ENCODE measurements at regions of chr17 and their contacts with region 1.

Region 1: GRCh38 chr17:70006159-70006558 is 68.9 kb upstream of the KCNJ16 start:
- DNase-seq: peak; percentile 83
- ATAC-seq: peak; percentile 98
- H3K4me3 ChIP-seq: peak overlapping the region; percentile 16; the same call in 1 of the 2 replicates
- H3K27ac ChIP-seq: peak overlapping the region; percentile 35
- H3K4me1 ChIP-seq: peaks cover 19% of the 10 kb centered on the region
- H3K27me3 ChIP-seq: no peaks in the 10 kb centered on the region
- CTCF ChIP-seq: no peak

Region 2: DNA sequence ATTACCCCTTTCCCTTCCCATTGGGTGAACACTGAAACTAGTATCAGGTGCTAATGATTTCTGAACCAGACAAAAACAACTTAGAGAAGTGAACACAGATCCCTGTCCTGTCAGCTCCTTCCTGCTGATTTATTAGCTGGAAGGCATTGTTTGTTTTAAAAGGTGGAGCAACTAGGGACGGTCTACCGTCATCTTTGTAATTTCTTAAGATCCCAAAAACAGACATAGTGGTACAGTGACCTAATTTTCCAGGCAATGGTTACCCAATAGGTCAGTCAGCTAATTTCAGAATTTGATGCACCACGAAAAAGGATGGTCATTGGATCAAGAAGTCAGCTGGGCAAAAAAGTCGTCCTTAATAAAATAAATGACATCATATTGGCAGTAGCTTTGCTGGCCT is 41.5 kb after region 1 on chr17:
- CTCF ChIA-PET with region 1: no interaction called
- POLR2A ChIA-PET with region 1: no interaction called
- intact Hi-C with region 1: loop called (anchors 5 kb)
- DNase-seq: peak; percentile 11
- ATAC-seq: no peak
- H3K4me3 ChIP-seq: no peak overlapping the region
- H3K27ac ChIP-seq: no peak overlapping the region
- H3K4me1 ChIP-seq: no peaks in the 10 kb centered on the region
- H3K27me3 ChIP-seq: no peaks in the 10 kb centered on the region
- CTCF ChIP-seq: no peak